Activated CD4-positive, alpha-beta memory T cell treated with anti-CD3 and anti-CD28 coated beads for 36 hours (primary cell): ENCODE measurements at regions of chr10 and their contacts with region 1.

Region 1: GRCh38 chr10:60490013-60490412 is 100.3 kb upstream of the ANK3 start:
- DNase-seq: no peak
- H3K4me3 Mint-ChIP-seq: no peak overlapping the region
- H3K27ac Mint-ChIP-seq: no peak overlapping the region
- H3K4me1 Mint-ChIP-seq: peaks cover 23% of the 10 kb centered on the region
- H3K27me3 Mint-ChIP-seq: no peaks in the 10 kb centered on the region

Region 2: DNA sequence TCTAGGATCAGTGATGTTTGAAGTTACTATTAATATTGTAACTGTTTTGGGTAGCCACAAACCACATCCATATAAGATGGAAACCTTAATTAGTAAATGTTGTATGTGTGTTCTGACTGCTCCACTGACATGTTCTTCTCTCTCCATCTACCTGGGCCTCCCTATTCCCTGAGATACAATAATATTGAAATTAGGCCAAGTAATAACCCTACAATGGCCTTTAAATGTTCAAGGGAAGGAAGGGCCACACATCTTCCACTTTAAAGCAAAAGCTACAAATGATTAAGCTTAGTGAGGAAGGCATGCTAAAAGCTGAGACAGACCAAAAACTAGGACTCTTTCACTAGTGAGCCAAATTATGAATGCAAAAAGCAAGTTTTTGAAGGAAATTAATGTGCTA is 76.1 kb after region 1 on chr10:
- CTCF ChIA-PET with region 1: no interaction called
- POLR2A ChIA-PET with region 1: no interaction called
- intact Hi-C with region 1: loop called (anchors 2 kb)
- DNase-seq: no peak
- H3K4me3 Mint-ChIP-seq: no peak overlapping the region
- H3K27ac Mint-ChIP-seq: peak overlapping the region; percentile 49
- H3K4me1 Mint-ChIP-seq: peaks cover 40% of the 10 kb centered on the region
- H3K27me3 Mint-ChIP-seq: no peaks in the 10 kb centered on the region